ENCODE measurements at regions of chr10 and their contacts with region 1.

Region 1: GRCh38 chr10:21525367-21526183 is at the start of gene SKIDA1:
- DNase-seq: peak; percentile 25 to 90
- H3K4me3 ChIP-seq: peak within 1 kb of the TSS; percentile 65 to 90
- H3K27ac ChIP-seq: peak within 1 kb of the TSS; percentile 98 to 100
- H3K4me1 ChIP-seq: peaks cover 0 to 3% of the 10 kb centered on the region in 2 donors
- H3K27me3 ChIP-seq: no peaks in the 10 kb centered on the region
- CTCF ChIP-seq: no peak
- total RNA-seq, gene SKIDA1: not detected

Region 2: GRCh38 chr10:20017961-20018360 is 1507.6 kb before region 1 on chr10:
- intact Hi-C with region 1: loop called (anchors 10 kb)
- DNase-seq: no peak
- H3K4me3 ChIP-seq: no peak overlapping the region
- H3K27ac ChIP-seq: no peak overlapping the region
- H3K4me1 ChIP-seq: peaks cover 0 to 6% of the 10 kb centered on the region in 2 donors
- H3K27me3 ChIP-seq: no peaks in the 10 kb centered on the region
- CTCF ChIP-seq: no peak

Region 3: GRCh38 chr10:21495752-21496342 is 29.7 kb before region 1 on chr10:
- intact Hi-C with region 1: no loop called
- DNase-seq: peak in 1 of 2 donors; percentile 91
- H3K4me3 ChIP-seq: peak overlapping the region; percentile 68 to 95
- H3K27ac ChIP-seq: peak overlapping the region; percentile 35 to 51
- H3K4me1 ChIP-seq: peaks cover 6% of the 10 kb centered on the region in 2 donors
- H3K27me3 ChIP-seq: no peaks in the 10 kb centered on the region
- CTCF ChIP-seq: peak; percentile 84 to 98 (median 92)

Region 4: GRCh38 chr10:21509341-21510240 is 16.0 kb before region 1 on chr10:
- intact Hi-C with region 1: no loop called
- DNase-seq: no peak
- H3K4me3 ChIP-seq: peak overlapping the region; percentile 51 to 80
- H3K27ac ChIP-seq: no peak overlapping the region
- H3K4me1 ChIP-seq: no peaks in the 10 kb centered on the region
- H3K27me3 ChIP-seq: no peaks in the 10 kb centered on the region
- CTCF ChIP-seq: no peak

Region 5: GRCh38 chr10:21661935-21662334 is 136.4 kb after region 1 on chr10:
- intact Hi-C with region 1: no loop called
- DNase-seq: no peak
- H3K4me3 ChIP-seq: no peak overlapping the region
- H3K27ac ChIP-seq: no peak overlapping the region
- H3K4me1 ChIP-seq: peaks cover 0 to 3% of the 10 kb centered on the region in 2 donors
- H3K27me3 ChIP-seq: no peaks in the 10 kb centered on the region
- CTCF ChIP-seq: no peak

Region 6: GRCh38 chr10:22251751-22252223 is 726.2 kb after region 1 on chr10:
- intact Hi-C with region 1: loop called (anchors 5 kb)
- DNase-seq: peak in 1 of 2 donors; percentile 81
- H3K4me3 ChIP-seq: peak overlapping the region; percentile 81 to 93
- H3K27ac ChIP-seq: peak overlapping the region; percentile 98
- H3K4me1 ChIP-seq: no peaks in the 10 kb centered on the region
- H3K27me3 ChIP-seq: no peaks in the 10 kb centered on the region
- CTCF ChIP-seq: no peak

Region 7: GRCh38 chr10:23067939-23068775 is 1542.6 kb after region 1 on chr10:
- intact Hi-C with region 1: loop called (anchors 10 kb)
- DNase-seq: peak in 1 of 2 donors; percentile 93
- H3K4me3 ChIP-seq: no peak overlapping the region
- H3K27ac ChIP-seq: peak overlapping the region; percentile 28 to 33
- H3K4me1 ChIP-seq: peaks cover 5 to 12% of the 10 kb centered on the region in 2 donors
- H3K27me3 ChIP-seq: no peaks in the 10 kb centered on the region
- CTCF ChIP-seq: peak; percentile 44 to 87 (median 86)

Region 8: DNA sequence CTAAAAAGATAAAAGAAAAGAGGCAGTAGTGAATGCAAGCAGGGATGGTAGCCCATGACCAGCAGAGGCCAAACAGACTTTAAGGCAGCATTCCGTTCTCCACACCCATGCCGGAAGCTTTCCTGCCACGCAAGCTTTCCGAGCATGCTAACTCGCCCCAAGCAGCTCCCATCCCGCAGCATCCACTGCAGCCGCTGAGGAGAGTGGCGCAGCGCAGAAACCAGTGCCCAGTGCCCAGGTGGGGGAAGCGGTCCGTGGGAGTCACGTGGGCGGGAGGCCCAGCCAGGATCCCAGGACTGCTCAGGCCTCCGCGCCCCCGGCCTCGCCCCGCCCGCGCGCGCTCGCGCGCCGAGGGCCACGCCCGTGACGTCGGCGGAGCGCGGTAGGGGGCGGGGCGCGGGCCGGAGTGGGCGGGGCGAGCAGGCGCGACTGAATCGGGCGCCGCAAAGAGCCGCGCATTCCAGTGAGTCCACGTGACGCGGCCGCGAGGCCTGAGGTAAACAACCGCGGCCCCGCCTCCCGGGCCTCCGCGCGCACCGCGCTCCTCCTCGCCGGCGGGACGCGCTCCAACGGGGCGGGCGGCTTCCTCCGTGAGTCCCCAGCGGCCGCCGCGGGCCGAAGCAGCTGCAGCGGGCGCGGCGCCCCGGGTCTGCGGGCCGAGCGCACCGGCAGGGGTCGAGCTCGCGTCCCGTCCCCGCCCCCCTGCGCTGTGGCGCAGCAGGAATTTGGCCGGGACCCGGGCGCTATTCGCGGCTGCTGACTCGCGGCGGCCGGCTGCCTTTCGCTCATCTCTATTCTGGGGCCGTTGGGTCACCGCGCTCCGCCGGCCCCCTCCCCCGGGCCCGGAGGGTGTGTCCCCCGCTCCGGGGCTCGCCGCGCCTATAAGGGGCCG is 1913.2 kb after region 1 on chr10 and contains the start of gene OTUD1:
- intact Hi-C with region 1: loop called (anchors 10 kb)
- DNase-seq: peak; percentile 82 to 98
- H3K4me3 ChIP-seq: peak within 1 kb of the TSS; percentile 91 to 96
- H3K27ac ChIP-seq: peak within 1 kb of the TSS; percentile 88 to 93
- H3K4me1 ChIP-seq: peaks cover 0 to 24% of the 10 kb centered on the region in 2 donors
- H3K27me3 ChIP-seq: no peaks in the 10 kb centered on the region
- CTCF ChIP-seq: peak in 1 of 3 experiments; percentile 26
- total RNA-seq, gene OTUD1: 24.1 TPM